ENCODE measurements at regions of chr1 and their contacts with region 1.

Region 1: DNA sequence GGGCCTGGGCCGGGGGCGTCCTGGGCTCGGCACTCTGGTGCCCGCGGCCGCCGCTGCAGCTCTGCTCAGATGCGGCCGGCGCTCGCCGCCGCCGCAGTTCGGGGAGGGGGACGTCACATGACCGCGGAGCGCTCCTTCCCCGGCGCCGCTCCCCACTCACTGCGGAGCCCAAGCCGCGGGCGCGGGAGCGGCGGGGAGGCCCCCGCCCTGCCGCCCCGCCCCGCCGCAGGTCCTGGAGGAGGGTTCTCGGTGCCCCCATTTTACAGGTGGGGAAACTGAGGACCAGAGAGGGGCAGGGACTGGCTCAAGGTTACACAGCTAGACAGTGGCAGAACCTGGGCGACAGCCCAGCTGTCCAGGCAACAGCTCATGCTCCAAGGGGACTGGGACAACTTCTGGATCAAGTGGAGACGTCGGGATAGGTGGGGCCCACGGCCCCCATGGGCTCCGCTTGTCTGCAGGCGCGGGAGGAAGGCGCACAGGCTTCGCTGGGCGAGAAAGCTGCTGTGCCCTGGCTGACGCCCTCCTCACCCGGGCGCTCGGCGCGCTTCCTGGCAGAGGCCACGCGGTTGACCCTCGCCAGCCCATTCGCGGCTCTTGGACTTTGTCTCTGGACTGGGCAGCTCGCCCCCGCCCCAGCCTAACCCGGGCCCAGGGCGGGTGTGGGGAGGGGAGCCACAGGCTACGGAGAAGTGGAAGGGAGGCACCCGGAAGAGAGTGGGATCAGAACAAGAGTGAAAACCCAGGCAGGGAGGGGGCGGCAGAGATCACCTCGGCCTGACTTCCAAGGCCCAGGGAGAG is at the start of gene RAP1GAP:
- DNase-seq: peak; percentile 46
- H3K4me3 ChIP-seq: peak within 1 kb of the TSS; percentile 41 to 49
- H3K27ac ChIP-seq: peak within 1 kb of the TSS in 1 of 2 donors; percentile 37
- H3K4me1 ChIP-seq: peaks cover 6% of the 10 kb centered on the region
- H3K27me3 ChIP-seq: no peaks in the 10 kb centered on the region
- CTCF ChIP-seq: peak in 2 of 4 experiments; percentile 12 to 24
- POLR2A ChIP-seq: no peak
- total RNA-seq, gene RAP1GAP: 22.9 to 36.1 TPM

Region 2: GRCh38 chr1:21232044-21232443 is 437.4 kb before region 1 on chr1:
- intact Hi-C with region 1: loop called (anchors 10 kb)
- DNase-seq: peak; percentile 58
- H3K4me3 ChIP-seq: no peak overlapping the region
- H3K27ac ChIP-seq: no peak overlapping the region
- H3K4me1 ChIP-seq: no peaks in the 10 kb centered on the region
- H3K27me3 ChIP-seq: no peaks in the 10 kb centered on the region
- CTCF ChIP-seq: peak; percentile 58 to 84 (median 82)
- POLR2A ChIP-seq: no peak

Region 3: DNA sequence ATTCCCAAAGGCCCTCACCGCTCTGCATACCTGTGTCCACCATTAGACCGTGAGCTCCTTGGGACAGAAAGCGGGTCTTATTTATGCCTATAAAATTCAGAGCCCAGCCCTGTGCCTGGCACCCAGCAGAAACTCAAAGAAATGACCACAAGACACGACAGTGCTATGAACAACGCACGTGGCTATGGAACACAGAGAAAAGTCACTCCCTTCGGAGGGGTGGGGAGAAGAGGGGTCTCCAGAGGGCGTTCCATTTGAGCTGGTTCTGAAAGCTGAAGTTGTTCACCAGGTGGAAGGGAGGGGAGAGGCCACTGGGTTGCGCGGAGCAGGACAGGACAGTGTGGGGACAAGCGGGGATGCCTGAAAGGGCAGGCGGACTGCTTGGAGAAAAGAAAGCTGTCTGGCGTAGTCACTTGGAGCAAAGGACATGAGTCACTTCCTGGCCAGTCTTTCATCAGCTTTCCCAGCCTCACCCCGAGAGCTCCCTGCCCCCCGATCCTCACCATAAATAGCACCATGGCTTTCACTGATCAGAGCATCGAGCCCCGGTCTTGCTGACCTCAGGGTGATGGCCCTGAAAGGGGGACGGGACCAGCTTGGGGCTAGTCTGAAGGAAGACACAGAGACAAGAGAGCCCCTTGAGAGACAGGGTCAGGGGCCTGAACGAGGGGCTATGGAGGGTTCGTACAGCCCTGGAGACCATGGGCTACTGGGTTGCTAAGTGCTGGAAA is 407.7 kb before region 1 on chr1:
- intact Hi-C with region 1: no loop called
- DNase-seq: no peak
- H3K4me3 ChIP-seq: no peak overlapping the region
- H3K27ac ChIP-seq: peak overlapping the region; percentile 73 to 84
- H3K4me1 ChIP-seq: peaks cover 11% of the 10 kb centered on the region
- H3K27me3 ChIP-seq: no peaks in the 10 kb centered on the region
- CTCF ChIP-seq: no peak
- POLR2A ChIP-seq: no peak

Region 4: GRCh38 chr1:21604208-21604957 is 65.1 kb before region 1 on chr1:
- intact Hi-C with region 1: no loop called
- DNase-seq: no peak
- H3K4me3 ChIP-seq: no peak overlapping the region
- H3K27ac ChIP-seq: no peak overlapping the region
- H3K4me1 ChIP-seq: no peaks in the 10 kb centered on the region
- H3K27me3 ChIP-seq: no peaks in the 10 kb centered on the region
- CTCF ChIP-seq: no peak
- POLR2A ChIP-seq: no peak

Region 5: DNA sequence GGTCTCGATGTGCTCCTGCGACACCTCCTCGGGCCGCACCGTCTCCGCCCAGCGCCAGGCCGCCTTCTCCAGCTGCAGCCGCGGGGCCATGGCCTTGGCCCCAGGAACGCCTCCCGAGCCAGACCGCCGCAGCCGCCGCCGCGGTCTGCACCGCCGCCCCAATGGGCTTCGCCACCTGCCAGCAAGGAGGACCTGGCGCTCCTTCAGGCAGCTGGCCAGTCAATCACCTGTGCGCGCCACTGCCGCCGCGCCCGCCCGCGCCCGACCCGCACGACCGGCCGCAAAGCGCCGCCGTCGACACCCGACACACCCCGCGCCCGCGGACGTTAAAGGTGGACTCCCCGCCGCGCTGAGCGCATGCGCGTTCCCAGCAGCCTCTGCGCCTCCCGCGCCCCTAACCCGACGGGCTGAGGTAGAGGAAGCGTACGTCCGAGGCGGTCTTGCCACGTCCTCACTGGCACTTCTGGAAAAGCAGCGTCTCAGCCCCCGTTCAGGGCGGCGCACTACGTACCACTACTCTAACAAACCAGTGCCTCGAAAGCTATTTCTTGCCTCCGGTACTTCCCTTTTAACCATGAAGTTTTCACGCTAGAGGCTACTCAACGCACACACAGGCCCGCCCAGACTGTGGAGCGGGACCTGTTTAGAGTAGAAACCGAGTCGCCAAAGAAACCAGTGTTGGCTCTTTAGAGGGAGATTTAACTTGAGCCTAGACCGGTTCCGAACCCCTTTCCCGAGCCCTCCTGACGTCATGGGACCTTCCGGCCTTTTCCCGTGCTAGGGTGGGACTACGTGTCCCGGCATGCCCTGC is 113.6 kb after region 1 on chr1 and contains the start of gene USP48:
- intact Hi-C with region 1: no loop called
- DNase-seq: peak; percentile 98
- H3K4me3 ChIP-seq: peak within 1 kb of the TSS; percentile 90 to 94
- H3K27ac ChIP-seq: peak within 1 kb of the TSS; percentile 100
- H3K4me1 ChIP-seq: peaks cover 4% of the 10 kb centered on the region
- H3K27me3 ChIP-seq: no peaks in the 10 kb centered on the region
- CTCF ChIP-seq: peak in 1 of 4 experiments; percentile 10
- POLR2A ChIP-seq: peak; percentile 87
- total RNA-seq, gene USP48: 36.2 to 47.5 TPM